Activated naive CD4-positive, alpha-beta T cell treated with anti-CD3 and anti-CD28 coated beads for 36 hours (primary cell): ENCODE measurements at regions of chr5 and their contacts with region 1.

Region 1: GRCh38 chr5:95760273-95761191 is 29.4 kb downstream of the RHOBTB3 start:
- DNase-seq: peak; percentile 48
- H3K4me3 Mint-ChIP-seq: peak overlapping the region; percentile 36
- H3K27ac Mint-ChIP-seq: peak overlapping the region; percentile 47
- H3K4me1 Mint-ChIP-seq: peaks cover 26% of the 10 kb centered on the region
- H3K27me3 Mint-ChIP-seq: no peaks in the 10 kb centered on the region

Region 2: DNA sequence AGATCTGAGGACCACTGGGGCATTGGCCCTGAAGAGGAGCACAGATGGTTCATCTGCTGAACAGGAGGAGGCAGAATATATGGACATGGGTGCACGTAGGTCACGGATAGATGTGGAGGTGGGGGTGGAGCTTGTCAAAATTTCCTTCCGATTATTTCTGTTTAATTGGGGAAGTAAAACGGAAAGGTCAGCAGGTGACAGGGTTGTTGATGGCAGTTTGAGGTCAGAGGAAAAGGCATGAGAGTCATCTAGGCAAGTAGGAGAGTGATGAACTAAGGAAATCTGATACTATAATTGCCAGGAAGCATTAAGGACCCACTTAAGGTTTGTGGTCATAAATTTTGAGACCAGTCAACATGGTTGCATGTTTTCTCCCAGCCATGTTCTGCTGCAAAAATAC is 377.7 kb before region 1 on chr5:
- CTCF ChIA-PET with region 1: no interaction called
- intact Hi-C with region 1: no loop called
- DNase-seq: no peak
- H3K4me3 Mint-ChIP-seq: no peak overlapping the region
- H3K27ac Mint-ChIP-seq: no peak overlapping the region
- H3K4me1 Mint-ChIP-seq: peaks cover 7% of the 10 kb centered on the region
- H3K27me3 Mint-ChIP-seq: peaks cover 12% of the 10 kb centered on the region

Region 3: DNA sequence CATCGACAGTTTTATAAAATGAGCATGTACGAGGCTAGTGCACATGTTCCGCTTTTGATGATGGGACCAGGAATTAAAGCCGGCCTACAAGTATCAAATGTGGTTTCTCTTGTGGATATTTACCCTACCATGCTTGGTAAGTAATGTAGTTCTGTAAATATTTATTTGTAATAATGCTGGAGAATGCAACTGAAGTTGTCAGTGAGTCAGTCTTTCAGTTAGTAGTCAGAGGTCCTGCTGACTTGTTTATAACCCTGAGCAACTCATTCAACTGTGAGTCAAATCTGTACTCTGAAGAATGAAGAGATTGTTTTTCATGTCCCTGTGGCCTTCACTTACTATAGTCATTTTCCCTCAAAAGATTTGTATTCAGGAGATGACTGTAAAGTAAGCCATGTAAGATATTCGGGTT is 169.0 kb before region 1 on chr5:
- CTCF ChIA-PET with region 1: no interaction called
- intact Hi-C with region 1: loop called (anchors 1 kb)
- DNase-seq: no peak
- H3K4me3 Mint-ChIP-seq: no peak overlapping the region
- H3K27ac Mint-ChIP-seq: no peak overlapping the region
- H3K4me1 Mint-ChIP-seq: peaks cover 25% of the 10 kb centered on the region
- H3K27me3 Mint-ChIP-seq: no peaks in the 10 kb centered on the region

Region 4: GRCh38 chr5:95638632-95639031 is 121.9 kb before region 1 on chr5:
- CTCF ChIA-PET with region 1: no interaction called
- intact Hi-C with region 1: no loop called
- DNase-seq: no peak
- H3K4me3 Mint-ChIP-seq: no peak overlapping the region
- H3K27ac Mint-ChIP-seq: no peak overlapping the region
- H3K4me1 Mint-ChIP-seq: peaks cover 4% of the 10 kb centered on the region
- H3K27me3 Mint-ChIP-seq: no peaks in the 10 kb centered on the region

Region 5: GRCh38 chr5:95682891-95683290 is 77.6 kb before region 1 on chr5 and contains the start of gene SPATA9:
- CTCF ChIA-PET with region 1: no interaction called
- intact Hi-C with region 1: no loop called
- DNase-seq: no peak
- H3K4me3 Mint-ChIP-seq: no peak within 1 kb of the TSS
- H3K27ac Mint-ChIP-seq: no peak within 1 kb of the TSS
- H3K4me1 Mint-ChIP-seq: no peaks in the 10 kb centered on the region
- H3K27me3 Mint-ChIP-seq: peaks cover 2% of the 10 kb centered on the region
- total RNA-seq, gene SPATA9: not detected

Region 6: DNA sequence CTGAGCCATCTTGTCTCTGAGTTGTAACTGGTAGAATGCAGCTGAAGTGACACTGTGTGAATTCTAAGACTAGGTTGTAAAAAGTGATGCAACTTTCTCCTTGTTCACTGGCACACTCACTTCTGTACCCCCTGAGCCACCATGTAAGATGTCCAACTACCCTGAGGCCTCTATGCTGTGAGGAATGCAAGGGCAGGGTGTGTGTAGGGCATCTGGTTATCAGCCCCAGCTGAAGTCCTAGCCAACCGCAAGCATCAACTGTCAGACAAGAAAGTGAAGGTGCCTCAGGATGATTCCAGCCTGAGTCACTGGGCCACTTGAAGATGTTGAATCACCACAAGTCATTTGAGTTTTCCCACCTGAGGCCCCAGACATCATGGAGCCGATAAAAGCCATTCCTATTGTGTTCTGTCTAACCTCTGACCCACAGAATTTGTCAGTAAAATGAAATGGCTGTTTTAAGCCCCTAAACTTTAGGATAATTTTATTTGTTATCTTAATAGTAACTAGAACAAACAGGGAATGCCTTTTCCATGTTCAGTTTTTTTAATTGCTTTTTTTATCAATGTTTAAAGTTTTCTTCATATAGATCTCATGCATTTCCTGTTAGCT is 48.1 kb before region 1 on chr5:
- CTCF ChIA-PET with region 1: interaction called, 5 read pairs
- intact Hi-C with region 1: loop called (anchors 1 kb)
- DNase-seq: peak; percentile 78
- H3K4me3 Mint-ChIP-seq: no peak overlapping the region
- H3K27ac Mint-ChIP-seq: no peak overlapping the region
- H3K4me1 Mint-ChIP-seq: peaks cover 30% of the 10 kb centered on the region
- H3K27me3 Mint-ChIP-seq: peaks cover 6% of the 10 kb centered on the region

Region 7: DNA sequence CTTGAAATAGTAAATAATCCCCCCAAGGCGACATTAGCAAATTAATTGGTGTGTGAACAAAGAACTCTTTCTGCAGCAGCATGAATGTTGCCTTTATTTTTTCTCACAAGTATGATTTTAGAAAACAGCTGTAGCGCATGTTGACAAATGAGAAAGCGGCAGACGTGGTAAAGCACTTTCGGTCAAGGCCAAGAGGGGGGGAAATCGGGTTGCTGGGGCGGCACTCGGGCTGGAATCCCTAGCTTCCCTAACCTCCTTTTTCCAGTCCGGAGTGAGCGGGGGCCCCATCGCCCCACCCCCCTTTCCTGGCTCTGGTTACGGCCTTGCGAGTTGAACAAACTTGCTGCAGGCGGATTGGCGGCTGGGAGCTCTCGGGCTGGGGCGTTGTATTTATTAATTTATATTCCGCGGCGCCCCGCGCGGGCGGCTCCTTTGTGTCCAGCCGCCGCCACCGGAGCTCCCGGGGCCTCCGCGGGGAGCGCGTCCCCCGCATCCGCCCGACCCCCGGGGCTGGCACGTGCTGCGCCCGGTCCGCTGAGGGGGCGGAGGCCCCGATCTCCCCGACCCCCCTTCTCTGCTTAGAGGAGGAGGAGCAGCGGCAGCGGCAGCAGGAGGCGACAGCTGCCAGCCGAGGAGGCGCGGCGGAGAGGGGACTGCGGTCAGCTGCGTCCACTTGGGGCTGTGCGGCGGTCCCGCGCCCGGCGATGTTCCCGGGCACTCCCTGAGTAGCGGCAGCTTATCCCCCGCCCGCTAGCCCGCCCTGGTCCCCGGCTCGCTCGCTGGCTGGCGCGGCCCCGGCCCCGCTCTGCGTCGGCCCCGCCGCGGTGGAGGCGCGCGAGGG is 29.6 kb before region 1 on chr5 and contains the start of gene RHOBTB3:
- CTCF ChIA-PET with region 1: no interaction called
- intact Hi-C with region 1: loop called (anchors 1 kb)
- DNase-seq: peak; percentile 28
- H3K4me3 Mint-ChIP-seq: peak within 1 kb of the TSS; percentile 75
- H3K27ac Mint-ChIP-seq: no peak within 1 kb of the TSS
- H3K4me1 Mint-ChIP-seq: peaks cover 39% of the 10 kb centered on the region
- H3K27me3 Mint-ChIP-seq: peaks cover 37% of the 10 kb centered on the region
- total RNA-seq, gene RHOBTB3: 1.5 to 2.4 TPM

Region 8: GRCh38 chr5:95773335-95774059 is 13.0 kb after region 1 on chr5:
- CTCF ChIA-PET with region 1: no interaction called
- intact Hi-C with region 1: no loop called
- DNase-seq: no peak
- H3K4me3 Mint-ChIP-seq: no peak overlapping the region
- H3K27ac Mint-ChIP-seq: no peak overlapping the region
- H3K4me1 Mint-ChIP-seq: no peaks in the 10 kb centered on the region
- H3K27me3 Mint-ChIP-seq: no peaks in the 10 kb centered on the region

Region 9: GRCh38 chr5:95808686-95809413 is 48.3 kb after region 1 on chr5:
- CTCF ChIA-PET with region 1: no interaction called
- intact Hi-C with region 1: loop called (anchors 1 kb)
- DNase-seq: peak; percentile 92
- H3K4me3 Mint-ChIP-seq: peak overlapping the region; percentile 57
- H3K27ac Mint-ChIP-seq: peak overlapping the region; percentile 81
- H3K4me1 Mint-ChIP-seq: peaks cover 55% of the 10 kb centered on the region
- H3K27me3 Mint-ChIP-seq: no peaks in the 10 kb centered on the region

Region 10: GRCh38 chr5:95835682-95836385 is 75.3 kb after region 1 on chr5:
- CTCF ChIA-PET with region 1: no interaction called
- intact Hi-C with region 1: loop called (anchors 2 kb)
- DNase-seq: peak; percentile 57
- H3K4me3 Mint-ChIP-seq: peak overlapping the region; percentile 77
- H3K27ac Mint-ChIP-seq: peak overlapping the region; percentile 92
- H3K4me1 Mint-ChIP-seq: peaks cover 47% of the 10 kb centered on the region
- H3K27me3 Mint-ChIP-seq: no peaks in the 10 kb centered on the region